GM12878 (cell line): ENCODE measurements at regions of chr13 and their contacts with region 1.

Region 1: DNA sequence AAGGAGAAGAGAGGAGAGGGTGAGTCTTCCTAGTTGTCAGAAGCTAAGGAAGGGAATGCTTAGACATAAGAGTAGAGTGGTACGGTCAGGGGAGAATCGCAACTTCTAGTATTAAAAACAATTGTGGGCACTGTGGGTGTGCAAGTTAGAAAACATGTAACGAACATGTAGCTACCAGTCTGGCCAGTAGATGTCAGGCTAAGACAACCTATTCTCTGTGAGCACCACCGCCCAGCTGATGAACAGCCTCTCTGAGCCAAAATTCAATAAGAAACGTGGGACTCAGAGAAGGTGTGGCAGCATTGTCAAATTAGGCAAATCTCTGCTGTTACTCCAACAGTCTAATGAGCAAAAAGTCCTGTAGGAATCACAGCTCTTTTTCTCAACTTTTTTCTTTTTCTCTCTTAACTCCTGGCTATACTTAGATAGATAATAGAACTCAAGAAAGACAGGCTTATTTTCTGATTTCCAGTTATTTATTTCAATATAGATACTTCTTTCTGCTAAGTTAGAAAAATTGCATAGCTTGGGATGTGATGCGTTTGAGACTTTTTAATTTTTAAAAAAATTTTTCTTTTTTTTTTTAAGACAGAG is 186.2 kb downstream of the USP12 start:
- DNase-seq: peak; percentile 49
- ATAC-seq: peak; percentile 91
- H3K4me3 ChIP-seq: no peak overlapping the region
- H3K27ac ChIP-seq: no peak overlapping the region
- H3K4me1 ChIP-seq: no peaks in the 10 kb centered on the region
- H3K27me3 ChIP-seq: no peaks in the 10 kb centered on the region
- CTCF ChIP-seq: peak; percentile 64 to 93 (median 68); a peak in 4 of 6 replicates
- EP300 ChIP-seq: no peak
- POLR2A ChIP-seq: no peak
- RAD21 ChIP-seq: peak; percentile 93

Region 2: GRCh38 chr13:26036383-26036782 is 949.0 kb before region 1 on chr13:
- CTCF ChIA-PET with region 1: no interaction called
- POLR2A ChIA-PET with region 1: interaction called, 11 read pairs
- RAD21 ChIA-PET with region 1: no interaction called
- SMC1A ChIA-PET with region 1: no interaction called
- in situ Hi-C with region 1: no loop called
- intact Hi-C with region 1: no loop called
- DNase-seq: no peak
- ATAC-seq: no peak
- H3K4me3 ChIP-seq: no peak overlapping the region
- H3K27ac ChIP-seq: no peak overlapping the region
- H3K4me1 ChIP-seq: no peaks in the 10 kb centered on the region
- H3K27me3 ChIP-seq: no peaks in the 10 kb centered on the region
- CTCF ChIP-seq: no peak
- EP300 ChIP-seq: no peak
- POLR2A ChIP-seq: no peak
- RAD21 ChIP-seq: no peak

Region 3: GRCh38 chr13:26459276-26460131 is 525.9 kb before region 1 on chr13:
- CTCF ChIA-PET with region 1: no interaction called
- POLR2A ChIA-PET with region 1: no interaction called
- RAD21 ChIA-PET with region 1: no interaction called
- SMC1A ChIA-PET with region 1: no interaction called
- in situ Hi-C with region 1: no loop called
- intact Hi-C with region 1: no loop called
- DNase-seq: no peak
- ATAC-seq: no peak
- H3K4me3 ChIP-seq: no peak overlapping the region
- H3K27ac ChIP-seq: no peak overlapping the region
- H3K4me1 ChIP-seq: no peaks in the 10 kb centered on the region
- H3K27me3 ChIP-seq: no peaks in the 10 kb centered on the region
- CTCF ChIP-seq: no peak
- EP300 ChIP-seq: no peak
- POLR2A ChIP-seq: no peak
- RAD21 ChIP-seq: no peak

Region 4: DNA sequence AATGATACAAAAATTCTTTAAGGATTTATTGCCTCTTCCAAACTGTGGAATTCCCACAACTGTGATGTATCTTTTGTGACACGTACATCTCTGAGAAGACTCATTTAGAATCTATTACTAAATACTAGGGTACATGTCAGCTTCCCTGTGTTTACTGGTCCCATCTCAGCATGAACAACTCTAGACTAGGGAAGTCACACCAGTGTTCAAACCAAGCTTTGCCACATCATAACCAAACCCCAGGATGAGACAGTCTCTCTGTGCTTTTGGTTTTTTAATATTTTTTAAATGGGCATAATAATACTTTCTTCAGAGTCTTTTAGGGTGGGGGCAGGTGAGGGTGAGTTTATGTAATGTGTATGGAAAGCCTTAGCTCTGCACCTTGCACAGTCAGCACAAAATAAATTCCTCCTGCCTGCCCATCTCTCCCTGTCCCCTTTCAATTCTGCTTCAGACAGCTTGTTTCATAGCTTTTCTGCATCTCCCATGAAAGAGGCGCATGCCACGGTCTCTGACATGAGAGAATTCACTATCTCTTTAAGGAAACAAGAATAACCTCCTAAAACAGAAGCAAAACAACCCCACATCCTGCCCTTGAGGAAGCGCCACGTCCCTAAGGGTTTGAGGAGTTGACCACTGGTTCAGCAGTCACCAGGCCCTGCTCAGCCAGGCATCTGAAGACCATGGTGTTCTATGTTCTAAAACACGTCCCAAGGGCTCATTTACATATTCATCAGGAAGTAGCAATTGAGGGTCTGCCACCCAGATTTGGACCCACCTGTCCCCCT is 11.8 kb after region 1 on chr13:
- CTCF ChIA-PET with region 1: interaction called, 18 read pairs
- POLR2A ChIA-PET with region 1: interaction called, 4 read pairs
- RAD21 ChIA-PET with region 1: no interaction called
- SMC1A ChIA-PET with region 1: interaction called, 14 read pairs
- in situ Hi-C with region 1: no loop called
- intact Hi-C with region 1: no loop called
- DNase-seq: peak; percentile 77
- ATAC-seq: peak; percentile 95
- H3K4me3 ChIP-seq: peak overlapping the region; percentile 8; the same call in 1 of the 2 replicates
- H3K27ac ChIP-seq: peak overlapping the region; percentile 42; the same call in 1 of the 2 replicates
- H3K4me1 ChIP-seq: peaks cover 15% of the 10 kb centered on the region
- H3K27me3 ChIP-seq: no peaks in the 10 kb centered on the region; a peak in 1 of 4 replicates
- CTCF ChIP-seq: no peak
- EP300 ChIP-seq: no peak
- POLR2A ChIP-seq: no peak
- RAD21 ChIP-seq: no peak

Region 5: DNA sequence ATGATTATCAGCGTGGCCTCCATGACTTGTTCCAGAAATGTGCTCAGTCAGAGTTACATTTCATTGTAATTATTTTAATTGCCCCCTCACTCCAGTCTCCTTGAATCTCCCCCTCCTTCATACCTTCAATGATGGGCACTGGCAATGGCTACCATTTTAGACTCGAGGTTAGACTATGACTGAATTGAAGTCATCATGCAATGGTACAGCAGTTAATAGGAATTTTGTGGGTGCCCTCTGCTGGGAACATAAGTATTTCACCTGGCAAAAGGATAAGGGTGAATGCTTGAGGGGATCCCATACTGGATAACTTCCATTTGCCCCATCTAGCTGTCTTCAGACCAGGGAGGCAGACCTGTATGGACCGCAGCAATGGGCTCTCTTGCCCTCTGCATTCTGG is 218.5 kb after region 1 on chr13:
- CTCF ChIA-PET with region 1: interaction called, 15 read pairs
- POLR2A ChIA-PET with region 1: no interaction called
- RAD21 ChIA-PET with region 1: no interaction called
- SMC1A ChIA-PET with region 1: interaction called, 17 read pairs
- in situ Hi-C with region 1: no loop called
- intact Hi-C with region 1: no loop called
- DNase-seq: no peak
- ATAC-seq: no peak; the same call in 2 of the 3 replicates
- H3K4me3 ChIP-seq: no peak overlapping the region
- H3K27ac ChIP-seq: no peak overlapping the region
- H3K4me1 ChIP-seq: no peaks in the 10 kb centered on the region
- H3K27me3 ChIP-seq: no peaks in the 10 kb centered on the region
- CTCF ChIP-seq: peak in 1 of 3 experiments; percentile 37; a peak in 2 of 6 replicates
- EP300 ChIP-seq: no peak
- POLR2A ChIP-seq: no peak
- RAD21 ChIP-seq: peak; percentile 35

Region 6: DNA sequence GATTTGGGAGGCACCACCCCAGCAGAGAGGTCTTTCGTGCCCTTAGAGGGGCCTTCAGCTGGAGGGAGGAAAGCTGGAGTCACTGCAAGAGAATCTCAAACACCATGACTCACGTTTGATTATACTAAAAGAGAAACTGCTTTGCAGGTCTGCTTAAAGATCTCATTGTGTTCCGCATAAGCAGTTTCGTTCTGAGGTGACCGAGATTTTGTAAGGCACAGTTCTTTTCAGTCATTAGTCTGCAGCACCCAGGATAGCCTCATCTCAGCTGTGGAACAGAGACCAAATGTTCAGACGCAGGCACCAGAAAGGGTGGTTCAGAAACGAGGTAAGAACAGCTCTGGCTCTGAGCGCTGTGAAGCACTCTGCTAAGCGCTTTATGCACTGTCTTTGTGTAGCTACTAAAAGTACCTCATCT is 367.8 kb after region 1 on chr13:
- CTCF ChIA-PET with region 1: interaction called, 147 read pairs
- POLR2A ChIA-PET with region 1: no interaction called
- RAD21 ChIA-PET with region 1: interaction called, 54 read pairs
- SMC1A ChIA-PET with region 1: interaction called, 81 read pairs
- in situ Hi-C with region 1: loop called (anchors 5 kb)
- intact Hi-C with region 1: no loop called
- DNase-seq: peak; percentile 89
- ATAC-seq: peak; percentile 99
- H3K4me3 ChIP-seq: peak overlapping the region; percentile 42; the same call in 1 of the 2 replicates
- H3K27ac ChIP-seq: peak overlapping the region; percentile 40; the same call in 1 of the 2 replicates
- H3K4me1 ChIP-seq: peaks cover 12% of the 10 kb centered on the region
- H3K27me3 ChIP-seq: no peaks in the 10 kb centered on the region
- CTCF ChIP-seq: no peak
- EP300 ChIP-seq: peak; percentile 17 to 59; a peak in 2 of 4 replicates
- POLR2A ChIP-seq: no peak
- RAD21 ChIP-seq: 0 out of 2 replicates have a peak, but pooled peaks have one; percentile 13

Region 7: DNA sequence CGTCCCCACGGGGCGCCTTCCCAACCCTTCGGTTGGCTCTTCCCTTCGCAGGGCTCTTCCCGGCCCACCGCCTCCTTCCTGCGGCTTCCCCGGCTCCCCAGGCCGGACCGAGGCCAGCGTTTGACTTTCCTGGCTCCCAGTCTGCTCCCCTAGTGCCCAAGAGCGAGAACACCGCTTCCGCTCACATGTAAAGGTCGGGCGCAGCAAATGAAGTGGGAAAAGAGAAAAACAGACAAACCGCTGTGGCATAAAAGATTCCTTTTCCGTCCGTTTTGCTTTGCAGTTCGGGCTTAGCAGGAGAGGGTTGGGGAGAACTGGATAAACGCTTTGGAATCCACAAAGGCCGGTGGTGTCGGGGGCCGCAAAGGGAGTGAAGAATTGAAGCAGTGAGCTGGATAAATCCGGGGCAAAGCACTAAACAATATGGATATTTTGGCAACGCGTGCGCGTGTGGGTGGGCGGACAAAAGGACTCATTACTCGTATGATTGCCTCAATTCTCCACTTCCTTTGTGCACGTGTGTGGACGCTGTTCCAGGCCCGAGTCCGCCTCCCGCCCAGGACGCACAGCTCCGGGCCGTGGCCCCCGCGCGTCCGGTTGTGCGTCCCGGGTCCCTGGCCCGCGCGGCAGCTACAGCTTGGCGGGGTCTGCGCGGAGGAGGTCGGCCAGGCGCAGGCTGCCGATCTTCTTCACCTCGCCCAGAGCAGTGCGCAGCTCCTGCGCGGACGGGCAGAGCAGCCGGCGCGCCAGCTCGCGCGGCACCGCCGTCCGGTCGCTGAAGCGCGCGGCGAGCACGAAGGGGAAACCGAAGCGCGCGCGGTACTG is 992.3 kb after region 1 on chr13:
- CTCF ChIA-PET with region 1: no interaction called
- POLR2A ChIA-PET with region 1: no interaction called
- RAD21 ChIA-PET with region 1: no interaction called
- SMC1A ChIA-PET with region 1: no interaction called
- in situ Hi-C with region 1: loop called (anchors 10 kb)
- intact Hi-C with region 1: loop called (anchors 10 kb)
- DNase-seq: no peak
- ATAC-seq: no peak
- H3K4me3 ChIP-seq: no peak overlapping the region
- H3K27ac ChIP-seq: no peak overlapping the region
- H3K4me1 ChIP-seq: no peaks in the 10 kb centered on the region
- H3K27me3 ChIP-seq: peaks cover 27 to 45% of the 10 kb centered on the region in 2 experiments
- CTCF ChIP-seq: no peak
- EP300 ChIP-seq: no peak
- POLR2A ChIP-seq: no peak
- RAD21 ChIP-seq: no peak